ENCODE measurements at regions of chr14 and their contacts with region 1.

Region 1: DNA sequence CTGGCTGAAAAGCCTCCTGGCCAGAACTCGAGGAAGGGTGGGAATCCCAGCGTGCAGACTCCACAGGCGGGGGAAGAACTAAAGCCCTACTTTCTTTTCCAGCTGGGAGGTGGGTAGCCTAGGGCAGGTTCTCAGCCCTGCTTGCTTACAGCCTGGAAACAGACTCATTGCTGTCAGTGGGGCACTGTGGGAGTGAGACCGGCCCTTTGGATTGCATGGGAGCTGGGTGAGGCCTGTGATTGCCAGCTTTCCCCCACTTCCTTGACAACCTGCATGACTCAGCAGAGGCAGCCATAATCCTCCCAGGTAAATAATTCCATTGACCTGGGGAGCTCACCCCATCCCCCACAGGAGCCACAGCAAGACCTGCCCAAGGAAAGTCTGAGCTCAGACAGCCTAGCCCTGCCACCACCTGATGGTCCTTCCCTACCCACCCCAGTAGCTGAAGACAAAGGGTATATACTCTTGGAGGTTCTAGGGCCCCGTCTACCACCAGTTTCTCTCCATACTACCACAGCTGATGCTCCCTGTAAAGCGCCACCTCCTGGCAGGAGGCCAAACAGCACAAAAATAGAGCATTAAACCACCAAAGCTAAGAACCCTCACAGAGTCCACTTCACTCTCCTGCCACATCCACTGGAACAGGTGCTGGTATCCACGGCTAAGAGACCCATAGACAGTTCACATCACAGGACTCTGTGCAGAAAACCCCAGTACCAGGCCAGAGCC is 294.1 kb downstream of the SEC23A start:
- DNase-seq: peak; percentile 62 to 77
- H3K4me3 ChIP-seq: no peak overlapping the region; the same call in 1 of the 2 replicates
- H3K27ac ChIP-seq: peak overlapping the region; percentile 78
- H3K4me1 ChIP-seq: peaks cover 13% of the 10 kb centered on the region
- H3K27me3 ChIP-seq: no peaks in the 10 kb centered on the region
- CTCF ChIP-seq: peak; percentile 39; the same call in 1 of the 2 replicates

Region 2: DNA sequence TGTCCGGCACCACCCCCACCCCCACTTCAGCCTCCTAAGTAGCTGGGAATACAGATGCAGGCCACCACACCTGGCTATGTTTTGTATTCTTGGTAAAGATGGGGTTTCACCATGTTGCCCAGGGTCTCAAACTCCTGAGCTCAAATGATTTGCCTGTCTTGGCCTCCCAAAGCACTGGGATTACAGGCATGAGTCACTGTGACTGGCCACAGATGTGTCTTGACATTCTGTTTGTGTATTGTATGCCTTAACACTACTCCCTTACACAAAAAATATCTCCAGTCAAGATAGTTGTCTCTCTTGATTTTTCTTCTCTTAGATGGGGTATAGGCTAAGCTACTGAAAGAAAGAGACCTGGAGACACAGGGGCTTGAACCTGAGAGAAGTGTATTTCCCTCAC is 570.6 kb before region 1 on chr14:
- CTCF ChIA-PET with region 1: no interaction called
- POLR2A ChIA-PET with region 1: no interaction called
- intact Hi-C with region 1: no loop called
- DNase-seq: no peak
- H3K4me3 ChIP-seq: no peak overlapping the region
- H3K27ac ChIP-seq: no peak overlapping the region
- H3K4me1 ChIP-seq: no peaks in the 10 kb centered on the region
- H3K27me3 ChIP-seq: no peaks in the 10 kb centered on the region
- CTCF ChIP-seq: no peak

Region 3: DNA sequence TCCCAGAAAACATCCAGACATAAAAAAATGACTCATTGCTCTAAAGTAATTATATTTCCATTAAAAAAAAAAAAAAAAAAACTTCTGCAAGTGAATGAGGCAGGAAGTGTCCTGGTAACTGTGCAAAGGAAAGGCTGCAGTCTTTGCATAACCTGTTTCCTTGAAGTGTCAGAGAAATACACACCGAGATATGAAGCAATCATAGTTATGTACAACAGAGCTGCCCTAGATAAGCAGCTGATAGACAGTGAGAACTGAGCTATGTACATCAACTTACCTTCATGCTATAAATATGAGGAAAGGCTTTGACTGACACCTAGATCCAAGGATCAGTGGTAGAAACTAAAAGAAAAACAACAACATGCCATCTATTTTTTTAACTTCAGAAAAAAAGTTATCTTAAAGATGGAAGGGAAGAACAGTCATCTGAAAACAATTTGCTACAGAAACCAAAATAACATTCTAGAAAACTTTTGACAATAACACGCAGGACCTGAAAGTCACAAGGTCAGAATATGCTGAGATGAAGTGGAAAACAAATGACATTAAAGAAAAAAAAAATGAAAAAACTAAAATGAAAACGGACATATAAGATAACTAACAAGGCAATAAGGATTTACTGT is 31.0 kb after region 1 on chr14:
- CTCF ChIA-PET with region 1: no interaction called
- POLR2A ChIA-PET with region 1: no interaction called
- intact Hi-C with region 1: loop called (anchors 2 kb)
- DNase-seq: peak; percentile 18 to 75
- H3K4me3 ChIP-seq: no peak overlapping the region
- H3K27ac ChIP-seq: no peak overlapping the region
- H3K4me1 ChIP-seq: no peaks in the 10 kb centered on the region
- H3K27me3 ChIP-seq: no peaks in the 10 kb centered on the region
- CTCF ChIP-seq: no peak

Measured in PC-9 (cell line).